CD14-positive monocyte (primary cell): ENCODE measurements at regions of chr2 and their contacts with region 1.

Region 1: GRCh38 chr2:225002039-225002655 is 40.1 kb downstream of the DOCK10 start:
- DNase-seq: peak; percentile 63 to 73 (median 73)
- H3K4me3 ChIP-seq: no peak overlapping the region
- H3K4me3 Mint-ChIP-seq: peak overlapping the region in 1 of 2 donors; percentile 64
- H3K27ac ChIP-seq: peak overlapping the region in 1 of 2 donors; percentile 58
- H3K27ac Mint-ChIP-seq: peak overlapping the region in 6 of 7 donors; percentile 12 to 76 (median 46)
- H3K4me1 ChIP-seq: peaks cover 6 to 7% of the 10 kb centered on the region in 2 donors
- H3K4me1 Mint-ChIP-seq: peaks cover 19% of the 10 kb centered on the region
- H3K27me3 ChIP-seq: no peaks in the 10 kb centered on the region
- H3K27me3 Mint-ChIP-seq: peaks cover 0 to 1% (median 0%) of the 10 kb centered on the region in 3 donors
- CTCF ChIP-seq: peak; percentile 82

Region 2: DNA sequence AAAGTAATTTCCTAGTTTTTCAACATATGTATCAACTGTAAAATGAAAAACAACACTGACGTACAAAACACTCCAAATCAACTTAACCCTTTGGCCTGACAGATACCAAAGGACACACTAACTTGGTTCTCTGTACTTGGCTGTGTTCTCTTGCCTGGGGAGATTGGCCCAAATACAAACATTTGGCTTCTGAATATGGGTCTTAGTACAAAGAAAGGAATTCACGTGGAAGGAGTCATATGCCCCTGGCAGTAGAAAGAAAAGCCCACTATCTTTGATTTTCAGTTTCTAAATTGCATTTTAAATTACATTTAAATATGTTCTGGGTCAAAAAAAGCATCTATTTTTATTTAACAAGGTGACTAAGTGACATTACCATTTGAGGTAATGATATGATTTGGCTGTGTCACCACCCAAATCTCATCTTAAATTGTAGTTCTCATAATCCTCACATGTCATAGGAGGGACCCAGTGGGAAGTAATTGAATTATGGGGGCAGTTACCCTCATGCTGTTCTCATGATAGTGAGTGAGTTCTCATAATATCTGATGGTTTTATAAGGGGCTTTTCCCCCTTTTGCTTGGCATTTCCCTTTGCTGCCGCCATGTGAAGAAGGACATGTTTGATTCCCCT is 132.4 kb before region 1 on chr2:
- intact Hi-C with region 1: loop called in 1 of 2 experiments (anchors 10 kb)
- DNase-seq: no peak
- H3K4me3 ChIP-seq: no peak overlapping the region
- H3K4me3 Mint-ChIP-seq: no peak overlapping the region
- H3K27ac ChIP-seq: no peak overlapping the region
- H3K27ac Mint-ChIP-seq: no peak overlapping the region
- H3K4me1 ChIP-seq: no peaks in the 10 kb centered on the region
- H3K4me1 Mint-ChIP-seq: no peaks in the 10 kb centered on the region
- H3K27me3 ChIP-seq: no peaks in the 10 kb centered on the region
- H3K27me3 Mint-ChIP-seq: no peaks in the 10 kb centered on the region
- CTCF ChIP-seq: no peak

Region 3: GRCh38 chr2:225164401-225165050 is 162.4 kb after region 1 on chr2:
- intact Hi-C with region 1: no loop called
- DNase-seq: peak in 2 of 3 donors; percentile 4 to 15
- H3K4me3 ChIP-seq: no peak overlapping the region
- H3K4me3 Mint-ChIP-seq: peak overlapping the region in 1 of 2 donors; percentile 14
- H3K27ac ChIP-seq: no peak overlapping the region
- H3K27ac Mint-ChIP-seq: no peak overlapping the region
- H3K4me1 ChIP-seq: peaks cover 0 to 6% of the 10 kb centered on the region in 2 donors
- H3K4me1 Mint-ChIP-seq: peaks cover 7% of the 10 kb centered on the region
- H3K27me3 ChIP-seq: no peaks in the 10 kb centered on the region
- H3K27me3 Mint-ChIP-seq: peaks cover 0 to 7% (median 0%) of the 10 kb centered on the region in 3 donors
- CTCF ChIP-seq: no peak